ENCODE measurements at regions of chr10 and their contacts with region 1.

Region 1: GRCh38 chr10:47261121-47261520 is 38.9 kb upstream of the GDF10 start:
- DNase-seq: peak; percentile 60
- ATAC-seq: peak; percentile 57
- H3K4me3 Mint-ChIP-seq: peak overlapping the region; percentile 23
- H3K27ac Mint-ChIP-seq: peak overlapping the region; percentile 97
- H3K4me1 Mint-ChIP-seq: peaks cover 94% of the 10 kb centered on the region
- H3K27me3 Mint-ChIP-seq: no peaks in the 10 kb centered on the region

Region 2: DNA sequence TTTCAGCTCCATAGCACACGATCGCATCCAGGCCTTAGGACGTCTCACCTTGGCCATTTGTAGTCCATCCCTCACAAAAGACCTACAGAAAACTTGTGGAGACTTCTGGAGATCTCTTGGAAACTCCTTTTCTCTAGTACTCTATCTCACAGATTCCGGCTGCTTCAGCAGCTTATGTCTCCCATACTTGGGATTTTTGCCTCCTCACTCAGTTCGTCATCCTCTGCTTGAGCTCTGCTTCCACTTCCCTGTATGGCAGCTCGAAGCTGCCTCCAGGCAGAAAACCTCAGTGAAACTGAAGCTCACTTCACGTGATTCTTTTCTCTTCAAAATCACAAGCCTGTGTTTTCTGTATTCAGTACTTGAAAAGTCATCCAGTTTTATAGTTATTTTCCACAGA is 139.8 kb before region 1 on chr10:
- CTCF ChIA-PET with region 1: no interaction called
- POLR2A ChIA-PET with region 1: no interaction called
- intact Hi-C with region 1: no loop called
- DNase-seq: no peak
- ATAC-seq: no peak
- H3K4me3 Mint-ChIP-seq: no peak overlapping the region
- H3K27ac Mint-ChIP-seq: no peak overlapping the region
- H3K4me1 Mint-ChIP-seq: no peaks in the 10 kb centered on the region
- H3K27me3 Mint-ChIP-seq: no peaks in the 10 kb centered on the region

Region 3: GRCh38 chr10:47165711-47166524 is 95.2 kb before region 1 on chr10:
- CTCF ChIA-PET with region 1: interaction called, 3 read pairs
- POLR2A ChIA-PET with region 1: no interaction called
- intact Hi-C with region 1: loop called (anchors 5 kb)
- DNase-seq: peak; percentile 55
- ATAC-seq: peak; percentile 65
- H3K4me3 Mint-ChIP-seq: peak overlapping the region; percentile 62
- H3K27ac Mint-ChIP-seq: peak overlapping the region; percentile 87
- H3K4me1 Mint-ChIP-seq: peaks cover 33% of the 10 kb centered on the region
- H3K27me3 Mint-ChIP-seq: peaks cover under 1% of the 10 kb centered on the region

Region 4: GRCh38 chr10:47217113-47217512 is 44.0 kb before region 1 on chr10:
- CTCF ChIA-PET with region 1: no interaction called
- POLR2A ChIA-PET with region 1: no interaction called
- intact Hi-C with region 1: loop called (anchors 2 kb)
- DNase-seq: no peak
- ATAC-seq: peak; percentile 92
- H3K4me3 Mint-ChIP-seq: no peak overlapping the region
- H3K27ac Mint-ChIP-seq: peak overlapping the region; percentile 12
- H3K4me1 Mint-ChIP-seq: peaks cover 18% of the 10 kb centered on the region
- H3K27me3 Mint-ChIP-seq: no peaks in the 10 kb centered on the region

Region 5: GRCh38 chr10:47321521-47322195 is 60.5 kb after region 1 on chr10:
- CTCF ChIA-PET with region 1: no interaction called
- POLR2A ChIA-PET with region 1: no interaction called
- intact Hi-C with region 1: no loop called
- DNase-seq: no peak
- ATAC-seq: no peak
- H3K4me3 Mint-ChIP-seq: no peak overlapping the region
- H3K27ac Mint-ChIP-seq: no peak overlapping the region
- H3K4me1 Mint-ChIP-seq: no peaks in the 10 kb centered on the region
- H3K27me3 Mint-ChIP-seq: no peaks in the 10 kb centered on the region

Region 6: DNA sequence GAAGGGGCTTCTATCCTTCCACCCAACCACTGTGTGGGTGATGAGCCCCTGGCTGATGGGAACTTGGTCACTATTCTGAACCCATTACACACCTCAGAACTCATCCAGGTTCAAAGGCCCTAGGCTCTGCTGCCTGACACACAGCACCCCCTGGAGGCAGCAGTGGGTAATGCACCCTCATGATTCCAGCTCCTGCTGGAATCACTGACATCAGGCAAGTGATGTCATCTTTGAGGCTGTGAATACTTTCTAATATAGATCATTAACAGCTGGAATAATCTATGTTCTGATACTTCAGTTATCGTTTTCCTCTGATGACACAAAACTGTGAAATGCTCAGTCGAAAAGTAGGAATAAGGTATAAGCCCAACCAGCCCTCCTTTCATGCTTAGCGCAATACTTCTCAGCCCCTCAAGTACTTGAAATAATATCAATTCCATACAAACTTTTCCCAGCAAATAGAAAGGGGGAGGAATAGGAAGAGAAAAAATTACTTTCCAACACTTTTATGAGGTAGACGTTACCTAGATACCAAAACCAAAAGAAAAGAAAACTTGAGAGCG is 79.6 kb after region 1 on chr10:
- CTCF ChIA-PET with region 1: no interaction called
- POLR2A ChIA-PET with region 1: no interaction called
- intact Hi-C with region 1: no loop called
- DNase-seq: peak; percentile 84
- ATAC-seq: peak; percentile 55
- H3K4me3 Mint-ChIP-seq: no peak overlapping the region
- H3K27ac Mint-ChIP-seq: no peak overlapping the region
- H3K4me1 Mint-ChIP-seq: no peaks in the 10 kb centered on the region
- H3K27me3 Mint-ChIP-seq: peaks cover 4% of the 10 kb centered on the region

Measured in activated CD4-positive, alpha-beta T cell treated with anti-CD3 and anti-CD28 coated beads for 36 hours (primary cell).